ENCODE measurements at regions of chr10 and their contacts with region 1.

Region 1: GRCh38 chr10:23525406-23525805 is 86.5 kb downstream of the OTUD1 start:
- DNase-seq: peak in 1 of 3 donors; percentile 30
- ATAC-seq: peak; percentile 57 to 86
- H3K4me3 ChIP-seq: no peak overlapping the region
- H3K27ac ChIP-seq: no peak overlapping the region
- H3K4me1 ChIP-seq: no peaks in the 10 kb centered on the region
- H3K27me3 ChIP-seq: no peaks in the 10 kb centered on the region

Region 2: DNA sequence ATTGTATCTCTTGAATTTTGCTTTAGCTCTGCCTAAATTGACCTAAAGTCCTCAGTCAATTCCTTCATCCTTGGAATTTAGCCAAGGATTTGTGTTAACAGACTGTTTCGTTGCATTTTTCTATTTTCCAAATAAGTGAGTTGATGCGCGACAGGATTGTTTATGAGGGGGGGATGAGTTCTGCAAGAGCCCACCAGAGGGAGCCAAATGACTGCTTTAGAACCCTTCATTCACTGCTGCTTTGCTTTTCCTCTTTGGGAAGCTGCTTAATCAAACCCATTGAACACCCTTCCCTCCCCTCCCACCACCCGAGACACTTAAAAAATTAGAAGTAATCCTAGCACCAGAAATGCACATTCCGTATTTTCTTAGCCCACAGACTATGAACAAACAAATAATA is 367.0 kb before region 1 on chr10:
- intact Hi-C with region 1: loop called in 2 of 4 experiments (anchors 5 to 10 kb)
- DNase-seq: peak in 1 of 3 donors; percentile 60
- ATAC-seq: peak; percentile 61 to 71
- H3K4me3 ChIP-seq: peak overlapping the region; percentile 27
- H3K27ac ChIP-seq: no peak overlapping the region
- H3K4me1 ChIP-seq: no peaks in the 10 kb centered on the region
- H3K27me3 ChIP-seq: no peaks in the 10 kb centered on the region

Region 3: GRCh38 chr10:23314835-23315239 is 210.6 kb before region 1 on chr10:
- intact Hi-C with region 1: loop called (anchors 2 to 5 kb)
- DNase-seq: no peak
- ATAC-seq: peak; percentile 41 to 60
- H3K4me3 ChIP-seq: no peak overlapping the region
- H3K27ac ChIP-seq: no peak overlapping the region
- H3K4me1 ChIP-seq: peaks cover 4% of the 10 kb centered on the region
- H3K27me3 ChIP-seq: no peaks in the 10 kb centered on the region

Measured in right cardiac atrium (tissue), 5 donors.